ENCODE measurements at regions of chr15 and their contacts with region 1.

Region 1: DNA sequence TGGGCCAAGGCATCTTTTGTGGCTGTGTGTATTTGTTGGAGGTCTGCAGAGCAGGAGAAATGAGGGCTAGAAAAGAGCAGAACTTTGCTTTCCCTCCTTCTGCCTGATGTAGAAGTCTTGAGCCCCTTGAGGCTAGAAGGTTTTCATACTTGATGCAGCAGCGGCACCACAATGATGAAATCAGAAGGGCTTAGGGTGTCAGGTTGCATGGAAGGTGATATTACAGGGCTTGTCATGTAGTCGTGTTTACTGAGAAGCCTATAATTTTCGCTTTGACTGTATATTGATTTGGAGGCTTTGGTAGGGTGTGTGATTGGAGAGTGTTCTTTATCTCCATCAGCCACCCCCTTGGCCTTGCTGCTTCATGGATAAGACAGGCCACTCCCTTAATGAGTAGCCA is 339.8 kb downstream of the THSD4 start:
- DNase-seq: no peak
- ATAC-seq: no peak
- H3K4me3 ChIP-seq: no peak overlapping the region
- H3K27ac ChIP-seq: no peak overlapping the region
- H3K4me1 ChIP-seq: no peaks in the 10 kb centered on the region
- H3K27me3 ChIP-seq: no peaks in the 10 kb centered on the region
- CTCF ChIP-seq: no peak

Region 2: GRCh38 chr15:71800835-71801745 is 346.0 kb after region 1 on chr15:
- intact Hi-C with region 1: loop called in 1 of 3 experiments (anchors 10 kb)
- DNase-seq: peak in 2 of 6 donors; percentile 24 to 72
- ATAC-seq: peak; percentile 82 to 93 (median 92)
- H3K4me3 ChIP-seq: no peak overlapping the region
- H3K27ac ChIP-seq: no peak overlapping the region
- H3K4me1 ChIP-seq: no peaks in the 10 kb centered on the region
- H3K27me3 ChIP-seq: no peaks in the 10 kb centered on the region
- CTCF ChIP-seq: peak; percentile 63 to 79 (median 71)